CD14-positive monocyte (primary cell): ENCODE measurements at regions of chr22 and their contacts with region 1.

Region 1: GRCh38 chr22:40645579-40646197 is 9.2 kb upstream of the MRTFA start:
- DNase-seq: no peak
- H3K4me3 ChIP-seq: peak overlapping the region in 1 of 3 experiments; percentile 36
- H3K4me3 Mint-ChIP-seq: no peak overlapping the region
- H3K27ac ChIP-seq: no peak overlapping the region
- H3K27ac Mint-ChIP-seq: no peak overlapping the region
- H3K4me1 ChIP-seq: peaks cover 7% of the 10 kb centered on the region in 2 donors
- H3K4me1 Mint-ChIP-seq: peaks cover 3% of the 10 kb centered on the region
- H3K27me3 ChIP-seq: no peaks in the 10 kb centered on the region
- H3K27me3 Mint-ChIP-seq: peaks cover 0 to 1% (median 0%) of the 10 kb centered on the region in 3 donors
- CTCF ChIP-seq: no peak

Region 2: DNA sequence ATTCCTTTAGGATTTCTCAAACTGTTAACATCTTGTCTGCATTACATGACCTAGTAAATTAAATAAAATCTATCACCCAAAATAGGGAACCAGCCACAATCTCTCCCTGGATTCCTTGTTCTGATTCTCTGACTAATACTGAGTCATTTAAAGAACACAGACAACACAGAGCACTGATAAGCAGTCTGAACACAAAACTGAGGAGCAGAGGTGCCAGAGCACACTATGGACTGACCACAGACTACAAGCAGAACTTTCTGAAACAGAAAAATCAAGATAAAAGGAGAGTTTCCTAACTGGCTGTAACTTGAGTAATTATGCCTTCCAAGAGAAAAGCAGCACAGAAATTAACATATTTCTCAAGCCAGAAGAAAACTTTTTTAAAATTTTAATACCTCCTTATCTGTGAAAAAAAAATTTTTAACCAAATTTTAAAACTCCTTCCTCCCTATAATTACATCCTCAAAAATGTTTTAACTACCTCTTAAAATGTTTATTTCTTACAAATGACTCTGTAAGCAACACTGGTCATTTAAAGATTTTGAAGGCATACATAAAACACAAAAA is 146.4 kb before region 1 on chr22:
- intact Hi-C with region 1: no loop called
- DNase-seq: peak; percentile 72 to 91 (median 85)
- H3K4me3 ChIP-seq: no peak overlapping the region
- H3K4me3 Mint-ChIP-seq: no peak overlapping the region
- H3K27ac ChIP-seq: peak overlapping the region in 1 of 2 donors; percentile 72
- H3K27ac Mint-ChIP-seq: peak overlapping the region; percentile 66 to 91 (median 82)
- H3K4me1 ChIP-seq: peaks cover 10 to 12% of the 10 kb centered on the region in 2 donors
- H3K4me1 Mint-ChIP-seq: peaks cover 13% of the 10 kb centered on the region
- H3K27me3 ChIP-seq: no peaks in the 10 kb centered on the region
- H3K27me3 Mint-ChIP-seq: peaks cover 0 to 2% (median 0%) of the 10 kb centered on the region in 3 donors
- CTCF ChIP-seq: no peak

Region 3: DNA sequence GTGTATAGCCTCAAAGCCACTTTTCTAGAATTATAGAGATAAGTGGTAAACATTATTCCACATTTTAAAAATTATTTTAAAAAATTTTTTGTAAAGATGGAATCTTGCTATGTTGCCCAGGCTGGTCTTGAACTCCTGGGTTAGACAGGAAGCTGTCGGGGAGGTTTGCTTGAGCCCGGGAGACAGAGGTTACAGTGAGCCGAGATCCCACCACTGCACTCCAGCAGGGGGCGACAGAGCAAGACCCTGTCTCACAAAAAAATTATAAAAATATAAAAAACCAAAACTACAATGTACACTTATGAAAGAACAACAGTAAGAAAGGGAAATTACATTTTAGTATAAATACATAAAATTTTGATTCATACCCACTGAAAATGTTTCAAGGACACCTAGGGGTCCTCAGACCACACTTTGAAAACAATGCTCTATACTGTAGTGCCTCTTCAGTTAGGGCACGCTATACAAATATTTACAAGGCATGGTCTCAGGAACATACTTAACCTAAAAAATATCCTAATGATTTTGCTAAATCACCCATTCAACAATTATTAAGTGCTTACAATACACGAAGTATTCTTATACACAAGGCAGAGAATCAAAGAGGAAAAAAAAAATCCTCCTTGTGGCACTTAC is 120.3 kb before region 1 on chr22:
- intact Hi-C with region 1: loop called (anchors 2 kb)
- DNase-seq: peak; percentile 43 to 52 (median 44)
- H3K4me3 ChIP-seq: no peak overlapping the region
- H3K4me3 Mint-ChIP-seq: no peak overlapping the region
- H3K27ac ChIP-seq: no peak overlapping the region
- H3K27ac Mint-ChIP-seq: no peak overlapping the region
- H3K4me1 ChIP-seq: no peaks in the 10 kb centered on the region
- H3K4me1 Mint-ChIP-seq: no peaks in the 10 kb centered on the region
- H3K27me3 ChIP-seq: no peaks in the 10 kb centered on the region
- H3K27me3 Mint-ChIP-seq: no peaks in the 10 kb centered on the region
- CTCF ChIP-seq: peak; percentile 88